Activated CD4-positive, alpha-beta T cell treated with anti-CD3 and anti-CD28 coated beads, Interleukin-2, amount 10 ng/mL, durations not matched to agents 24 days and 14 days (primary cell): ENCODE measurements at regions of chr14 and their contacts with region 1.

Region 1: GRCh38 chr14:68780358-68781160 is 12.3 kb downstream of the ZFP36L1 start:
- DNase-seq: peak; percentile 84
- H3K4me3 Mint-ChIP-seq: peak overlapping the region; percentile 76
- H3K27ac Mint-ChIP-seq: peak overlapping the region; percentile 95
- H3K4me1 Mint-ChIP-seq: peaks cover 64% of the 10 kb centered on the region
- H3K27me3 Mint-ChIP-seq: no peaks in the 10 kb centered on the region

Region 2: DNA sequence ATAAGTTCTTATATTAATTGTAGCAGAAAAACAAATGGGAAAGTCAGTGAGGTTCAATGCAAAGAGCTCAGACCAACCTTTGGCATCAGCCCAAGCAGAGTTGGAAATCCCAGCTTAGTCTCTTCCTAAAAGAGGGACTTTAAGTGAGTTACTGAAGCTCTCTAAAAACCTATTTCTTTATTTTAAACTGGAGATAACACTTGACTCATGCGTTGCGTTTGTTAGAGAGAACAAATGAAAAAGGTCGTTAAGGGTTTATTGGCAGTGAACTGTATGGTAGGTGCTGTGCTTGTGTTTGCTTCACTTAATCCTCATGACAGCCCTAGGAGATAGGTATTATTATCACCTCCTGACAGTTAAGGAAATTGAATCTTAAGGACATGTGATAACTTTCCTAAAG is 564.5 kb before region 1 on chr14:
- intact Hi-C with region 1: no loop called
- DNase-seq: no peak
- H3K4me3 Mint-ChIP-seq: no peak overlapping the region
- H3K27ac Mint-ChIP-seq: no peak overlapping the region
- H3K4me1 Mint-ChIP-seq: peaks cover 21% of the 10 kb centered on the region
- H3K27me3 Mint-ChIP-seq: no peaks in the 10 kb centered on the region

Region 3: DNA sequence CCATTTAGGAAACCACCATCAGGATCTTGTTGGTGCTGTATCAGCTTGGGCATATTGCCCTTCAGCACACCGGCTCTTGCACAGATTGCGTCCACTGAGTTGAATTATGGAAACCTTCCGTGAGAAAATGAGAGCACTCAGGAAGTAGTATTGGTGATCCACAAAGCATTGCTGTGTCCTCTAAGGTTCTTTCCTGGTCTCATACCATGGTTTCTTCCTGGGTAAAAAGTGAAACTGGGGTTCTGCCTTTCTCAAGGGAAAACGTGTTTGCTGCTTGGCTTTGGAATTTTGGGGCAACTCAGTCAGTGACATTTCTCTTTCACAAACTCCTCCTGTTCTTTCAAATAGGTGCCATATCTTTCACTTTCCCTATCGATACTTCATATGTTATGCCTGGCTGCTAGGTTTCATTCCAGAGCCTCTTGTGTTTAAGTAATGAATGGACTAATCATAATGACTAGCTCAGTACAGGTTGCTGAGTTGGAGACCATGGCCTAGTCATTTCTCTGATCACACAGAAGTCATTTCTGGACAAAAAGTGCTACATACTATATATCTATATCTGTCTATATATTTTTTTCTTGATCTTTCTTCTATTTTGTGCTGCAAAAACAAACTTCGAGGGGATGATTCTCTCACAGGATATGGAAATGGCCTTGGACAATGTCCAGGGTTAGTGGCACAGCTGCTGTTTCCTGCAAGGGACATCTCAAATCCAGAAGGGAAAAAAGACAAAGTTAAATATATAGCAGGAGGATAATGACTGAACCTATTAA is 411.1 kb before region 1 on chr14:
- intact Hi-C with region 1: loop called (anchors 5 kb)
- DNase-seq: no peak
- H3K4me3 Mint-ChIP-seq: peak overlapping the region; percentile 10
- H3K27ac Mint-ChIP-seq: peak overlapping the region; percentile 25
- H3K4me1 Mint-ChIP-seq: peaks cover 22% of the 10 kb centered on the region
- H3K27me3 Mint-ChIP-seq: no peaks in the 10 kb centered on the region

Region 4: DNA sequence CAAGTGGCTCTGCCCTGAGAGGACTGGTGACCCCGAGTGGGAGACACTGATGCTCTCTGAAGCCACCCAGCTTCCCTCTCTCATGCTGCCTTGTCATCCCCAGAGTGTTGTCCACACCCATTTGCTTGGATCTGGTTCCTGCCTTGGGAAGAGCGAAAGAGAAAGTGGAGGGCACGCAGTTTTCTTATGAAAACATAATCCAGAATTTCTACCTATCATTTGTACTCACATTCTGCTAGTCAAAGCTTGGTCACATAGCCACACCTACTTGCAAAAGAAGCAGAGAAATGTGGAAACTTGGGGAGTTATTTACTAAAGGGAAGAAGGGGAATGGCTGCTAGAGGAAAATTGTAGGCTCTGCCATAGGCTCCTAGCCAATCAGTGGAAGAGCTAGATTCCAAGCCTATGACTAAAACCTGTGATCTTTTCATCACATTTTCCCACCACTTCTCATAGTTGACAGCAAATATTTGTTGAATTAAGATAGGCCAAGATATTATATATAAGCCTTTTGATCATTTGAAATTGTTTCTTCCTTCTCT is 314.0 kb before region 1 on chr14:
- intact Hi-C with region 1: loop called (anchors 5 kb)
- DNase-seq: no peak
- H3K4me3 Mint-ChIP-seq: no peak overlapping the region
- H3K27ac Mint-ChIP-seq: no peak overlapping the region
- H3K4me1 Mint-ChIP-seq: peaks cover 27% of the 10 kb centered on the region
- H3K27me3 Mint-ChIP-seq: no peaks in the 10 kb centered on the region

Region 5: DNA sequence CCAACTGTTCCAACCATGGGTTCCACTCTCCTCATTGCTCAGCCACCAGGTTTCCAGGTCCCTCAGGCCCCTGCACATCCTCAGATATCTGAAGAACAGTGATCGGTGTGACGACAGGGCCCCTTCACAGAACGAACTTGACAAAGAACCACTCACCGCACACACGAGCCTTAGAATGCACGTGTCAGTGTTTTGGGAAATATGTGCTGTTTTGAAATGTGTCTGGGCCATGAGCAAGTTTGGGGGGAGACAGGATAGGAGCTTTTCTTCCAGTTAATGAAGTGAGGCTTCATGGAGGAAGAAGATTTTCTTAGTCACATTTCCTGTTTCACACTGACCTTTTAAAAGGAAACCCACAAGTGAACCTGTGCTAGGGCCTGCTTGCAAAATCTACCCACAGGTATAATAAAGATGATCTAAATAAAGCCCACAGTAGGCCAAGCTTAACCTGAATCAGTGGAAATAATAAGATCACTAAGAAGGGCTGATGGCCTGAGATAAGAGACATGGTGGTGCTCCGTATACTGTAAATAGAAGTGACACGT is 46.3 kb before region 1 on chr14:
- intact Hi-C with region 1: loop called (anchors 1 kb)
- DNase-seq: peak; percentile 70
- H3K4me3 Mint-ChIP-seq: peak overlapping the region; percentile 58
- H3K27ac Mint-ChIP-seq: peak overlapping the region; percentile 80
- H3K4me1 Mint-ChIP-seq: peaks cover 54% of the 10 kb centered on the region
- H3K27me3 Mint-ChIP-seq: no peaks in the 10 kb centered on the region

Region 6: DNA sequence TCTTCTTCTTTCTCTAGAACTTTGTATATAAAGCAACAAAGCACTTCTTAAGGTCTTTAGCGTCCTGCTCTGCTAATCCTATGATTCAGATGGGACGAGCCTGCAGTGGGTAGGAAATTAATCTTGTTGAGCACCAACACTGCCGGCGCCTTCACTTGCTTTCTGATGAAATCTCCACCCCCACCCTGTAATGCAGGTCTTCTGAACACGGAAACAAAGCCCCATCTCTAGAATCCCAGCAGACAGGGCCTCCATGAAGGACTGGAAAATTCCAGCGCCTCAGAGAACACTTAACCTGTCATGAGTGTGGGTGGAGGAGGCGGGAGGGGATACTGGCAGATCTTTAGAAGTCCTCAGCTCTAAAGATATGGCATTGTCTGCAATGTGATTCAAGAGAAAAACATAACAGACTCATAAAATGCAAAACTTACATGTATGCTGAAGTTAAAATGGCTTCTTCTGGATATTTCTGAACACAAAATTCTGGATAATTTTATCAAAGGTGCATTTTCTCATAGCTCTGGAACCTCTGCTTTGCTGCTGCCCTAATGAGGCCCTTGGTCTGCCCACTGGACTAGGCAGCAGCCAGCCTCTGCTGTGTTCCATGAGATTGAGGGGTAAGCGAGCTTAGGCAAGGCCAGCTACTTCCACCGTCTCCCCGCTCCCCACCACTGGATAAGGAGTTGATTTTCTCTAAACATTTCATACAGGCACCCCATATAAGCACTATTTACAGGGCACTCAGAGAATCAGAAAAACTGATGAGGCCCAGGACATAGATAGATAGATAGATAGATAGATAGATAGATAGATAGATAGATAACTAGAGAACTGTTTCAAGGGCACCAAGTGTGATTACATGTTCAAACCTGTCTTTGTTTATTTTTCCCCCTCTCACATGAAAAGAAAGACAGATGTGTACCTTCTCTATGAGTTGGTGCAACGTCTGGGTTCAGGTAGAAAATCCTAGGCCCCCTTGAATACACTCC is 30.8 kb before region 1 on chr14:
- intact Hi-C with region 1: no loop called
- DNase-seq: no peak
- H3K4me3 Mint-ChIP-seq: no peak overlapping the region
- H3K27ac Mint-ChIP-seq: no peak overlapping the region
- H3K4me1 Mint-ChIP-seq: peaks cover 2% of the 10 kb centered on the region
- H3K27me3 Mint-ChIP-seq: peaks cover 7% of the 10 kb centered on the region

Region 7: DNA sequence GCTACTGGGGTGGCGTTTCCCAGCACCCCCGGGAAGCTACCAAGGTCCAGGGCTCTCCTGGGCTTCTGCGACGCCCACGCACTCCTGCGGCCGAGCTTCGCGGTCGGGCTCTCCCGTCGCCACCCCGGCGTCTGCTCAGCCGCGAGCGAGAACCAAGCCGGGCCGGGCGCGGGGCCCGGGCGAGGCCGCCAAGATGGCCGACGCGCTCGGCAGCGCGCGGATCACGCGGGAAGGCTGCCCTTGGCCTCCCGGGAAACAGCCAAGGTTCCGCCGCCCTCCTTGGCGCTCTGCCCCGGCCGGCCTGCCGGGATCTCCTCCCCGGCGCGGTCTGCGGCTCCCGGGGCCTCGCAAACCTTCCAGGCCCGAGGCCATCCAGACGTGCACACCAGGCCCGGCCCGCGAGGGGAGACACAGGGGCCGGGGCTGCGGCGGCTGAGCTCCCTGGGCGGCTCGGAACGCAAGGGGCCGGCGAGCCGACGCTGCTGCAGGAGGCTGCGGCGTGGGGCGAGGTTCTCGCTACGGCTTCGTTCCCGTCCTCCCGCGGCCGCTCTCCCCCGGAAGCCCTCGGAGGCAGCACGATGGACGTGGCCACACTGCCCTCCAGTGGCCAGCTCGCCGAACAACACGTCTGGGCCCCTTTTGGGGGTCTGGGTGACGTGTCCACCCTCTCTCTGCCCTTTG is 35.8 kb after region 1 on chr14:
- intact Hi-C with region 1: loop called (anchors 5 kb)
- DNase-seq: peak; percentile 97
- H3K4me3 Mint-ChIP-seq: peak overlapping the region; percentile 79
- H3K27ac Mint-ChIP-seq: peak overlapping the region; percentile 90
- H3K4me1 Mint-ChIP-seq: peaks cover 56% of the 10 kb centered on the region
- H3K27me3 Mint-ChIP-seq: no peaks in the 10 kb centered on the region